ENCODE measurements at regions of chr13 and their contacts with region 1.

Region 1: GRCh38 chr13:30617315-30618185 is at the start of gene USPL1:
- DNase-seq: peak; percentile 99
- H3K4me3 Mint-ChIP-seq: no peak within 1 kb of the TSS
- H3K27ac Mint-ChIP-seq: no peak within 1 kb of the TSS
- H3K4me1 Mint-ChIP-seq: peaks cover 12% of the 10 kb centered on the region
- H3K27me3 Mint-ChIP-seq: no peaks in the 10 kb centered on the region
- total RNA-seq, gene USPL1: 17.2 and 17.5 TPM in 2 replicates

Region 2: DNA sequence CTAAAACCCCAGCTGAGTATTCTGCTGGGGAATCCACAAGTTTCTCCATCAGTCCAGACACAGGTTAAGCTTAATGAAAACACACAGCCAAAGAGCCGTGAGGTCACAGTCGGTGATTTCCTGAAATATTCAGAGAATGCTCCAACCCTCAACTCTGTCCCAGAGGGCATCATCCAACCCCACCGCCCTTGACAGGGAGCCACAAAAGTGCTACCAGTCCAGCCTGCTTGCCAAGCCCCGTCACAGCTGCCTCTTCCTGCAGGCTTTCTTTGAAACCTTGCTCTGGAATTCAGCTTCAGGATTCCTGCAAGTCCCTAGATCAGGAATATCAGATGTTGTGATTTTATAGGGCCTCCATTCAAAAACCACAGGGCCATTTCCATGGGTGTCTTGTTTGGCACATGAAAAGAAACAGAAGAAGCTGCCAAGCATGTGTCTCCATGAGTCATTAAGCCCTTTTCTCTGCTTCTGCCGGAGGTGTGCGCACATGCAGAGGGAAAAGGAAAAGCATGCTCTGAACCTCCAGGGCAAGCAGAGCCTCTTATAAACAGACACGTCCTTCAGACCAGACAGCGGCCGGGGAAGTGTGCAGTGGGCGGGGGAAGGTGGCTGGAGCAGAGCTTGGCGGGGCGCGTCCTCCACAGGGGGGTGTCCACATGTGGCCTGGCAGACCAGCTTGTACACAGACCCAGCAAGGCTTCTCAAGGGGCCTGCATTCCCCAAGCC is 474.9 kb before region 1 on chr13:
- intact Hi-C with region 1: loop called (anchors 5 kb)
- DNase-seq: peak; percentile 28
- H3K4me3 Mint-ChIP-seq: peak overlapping the region; percentile 31
- H3K27ac Mint-ChIP-seq: peak overlapping the region; percentile 86
- H3K4me1 Mint-ChIP-seq: peaks cover 61% of the 10 kb centered on the region
- H3K27me3 Mint-ChIP-seq: peaks cover 4% of the 10 kb centered on the region

Region 3: DNA sequence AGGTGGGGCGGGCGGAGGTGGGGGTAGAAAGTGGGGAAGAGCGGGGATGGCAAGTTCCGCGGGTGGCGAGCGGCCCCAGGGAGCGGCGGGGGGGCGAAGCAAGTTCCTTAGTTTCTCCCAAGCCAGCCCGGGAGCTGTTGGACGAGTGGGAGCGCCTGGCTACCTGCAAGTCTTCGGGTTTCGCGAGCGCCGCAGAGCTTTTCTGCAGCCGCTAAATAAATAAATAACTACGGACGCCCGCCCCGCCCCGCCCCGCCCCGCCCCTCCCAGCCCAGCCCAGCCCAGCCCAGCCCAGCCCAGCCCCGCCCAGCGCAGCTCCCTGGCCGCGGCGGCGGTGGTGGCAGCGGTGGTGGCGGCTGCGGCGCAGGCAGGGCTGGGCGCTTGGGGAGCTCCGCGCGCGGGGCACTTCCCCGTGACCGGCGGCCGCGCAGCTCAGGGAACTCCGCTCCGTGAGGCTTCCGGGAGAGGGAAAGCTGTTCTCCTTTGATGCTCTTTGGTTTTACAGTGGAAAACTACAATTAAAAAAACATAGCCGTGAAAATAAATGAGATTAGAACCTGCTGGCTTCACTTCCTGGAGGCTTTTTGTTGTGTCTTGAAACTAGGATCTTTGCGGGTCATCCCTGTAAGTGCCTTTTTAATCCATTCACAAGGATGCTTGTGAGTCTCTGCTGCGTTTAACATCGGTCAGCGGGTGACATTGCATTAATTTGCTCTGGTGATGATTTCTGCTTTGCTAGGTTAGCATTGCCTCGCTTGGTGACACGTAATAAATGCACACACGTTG is 195.3 kb before region 1 on chr13 and contains the start of gene UBE2L5:
- intact Hi-C with region 1: loop called (anchors 5 kb)
- DNase-seq: peak; percentile 75
- H3K4me3 Mint-ChIP-seq: peak within 1 kb of the TSS; percentile 88
- H3K27ac Mint-ChIP-seq: peak within 1 kb of the TSS; percentile 86
- H3K4me1 Mint-ChIP-seq: peaks cover 26% of the 10 kb centered on the region
- H3K27me3 Mint-ChIP-seq: peaks cover 4% of the 10 kb centered on the region
- total RNA-seq, gene UBE2L5: not detected in 2 replicates

Region 4: DNA sequence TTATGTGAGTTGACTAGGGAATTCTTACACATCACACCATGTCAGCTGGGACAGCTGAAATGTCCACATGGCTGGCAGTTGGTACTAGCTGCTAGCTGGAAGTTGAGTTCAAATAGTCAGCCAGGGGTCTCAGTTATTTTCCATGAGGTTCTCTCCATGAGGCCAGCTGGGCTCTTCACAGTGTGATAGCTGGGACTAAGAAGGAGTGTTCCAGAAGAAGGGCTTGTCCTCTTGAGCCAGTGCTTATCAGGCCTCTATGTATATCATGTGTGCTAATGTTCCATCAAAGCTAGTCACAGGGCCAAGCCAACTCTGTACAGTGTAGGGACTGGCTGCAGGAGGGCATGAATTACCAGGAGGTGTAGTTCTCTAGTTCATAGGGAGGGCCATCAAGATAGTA is 12.0 kb after region 1 on chr13:
- intact Hi-C with region 1: loop called (anchors 1 kb)
- DNase-seq: no peak
- H3K4me3 Mint-ChIP-seq: no peak overlapping the region
- H3K27ac Mint-ChIP-seq: no peak overlapping the region
- H3K4me1 Mint-ChIP-seq: peaks cover 47% of the 10 kb centered on the region
- H3K27me3 Mint-ChIP-seq: no peaks in the 10 kb centered on the region

Region 5: DNA sequence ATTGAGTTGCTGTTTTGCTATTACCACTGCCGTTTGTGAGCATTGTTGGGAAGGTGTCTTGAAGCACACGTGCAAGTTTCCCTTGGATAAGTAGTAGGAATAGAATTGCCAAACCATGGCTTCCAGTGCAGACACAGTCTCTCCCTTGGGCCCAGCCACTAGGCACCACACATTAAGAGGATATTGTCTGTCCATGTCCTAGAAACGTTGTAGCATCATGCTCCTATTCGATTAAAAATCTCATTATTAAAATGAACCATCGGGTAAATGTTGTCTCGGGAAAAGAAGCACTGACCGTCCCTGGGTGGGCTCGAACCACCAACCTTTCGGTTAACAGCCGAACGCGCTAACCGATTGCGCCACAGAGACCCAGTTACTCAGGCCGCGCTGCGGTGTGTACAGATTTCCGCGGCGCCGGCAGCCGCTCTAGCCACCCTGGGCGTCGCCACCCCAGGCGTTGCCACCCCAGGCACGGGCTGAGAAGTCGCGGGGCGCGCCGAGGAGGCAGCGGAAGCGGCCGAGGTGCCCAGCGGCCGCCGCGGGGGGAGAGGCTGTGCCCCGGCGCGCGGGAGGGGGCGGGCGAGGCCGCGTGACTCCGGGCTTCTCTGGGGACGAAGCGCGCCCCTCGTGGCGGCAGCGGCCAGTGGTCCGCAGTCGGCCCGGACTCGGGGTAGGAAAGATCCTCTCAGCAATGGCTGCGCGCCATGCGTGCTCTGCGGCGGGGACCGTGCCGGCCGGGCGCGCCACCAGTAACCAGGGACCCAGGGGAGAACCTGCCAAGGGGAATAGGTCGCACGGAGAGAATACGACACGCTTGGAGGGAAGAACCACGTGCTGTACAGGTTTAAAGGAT is 56.3 kb after region 1 on chr13:
- intact Hi-C with region 1: loop called (anchors 1 kb)
- DNase-seq: peak; percentile 80
- H3K4me3 Mint-ChIP-seq: peak overlapping the region; percentile 85
- H3K27ac Mint-ChIP-seq: peak overlapping the region; percentile 84
- H3K4me1 Mint-ChIP-seq: peaks cover 28% of the 10 kb centered on the region
- H3K27me3 Mint-ChIP-seq: peaks cover 22% of the 10 kb centered on the region

Measured in activated T-helper 1 cell treated with anti-CD3 and anti-CD28 coated beads, Interleukin-12 subunit alpha, Interleukin-12 subunit beta, Interleukin-2, Interleukin-4 antibody, amounts not matched to agents 30 ng/mL and 10 ng/mL and 1 ng/mL, durations not matched to agents 14 hours and 24 hours and 36 hours (primary cell).